Heart right ventricle (tissue), 16 donors: ENCODE measurements at regions of chr11 and their contacts with region 1.

Region 1: DNA sequence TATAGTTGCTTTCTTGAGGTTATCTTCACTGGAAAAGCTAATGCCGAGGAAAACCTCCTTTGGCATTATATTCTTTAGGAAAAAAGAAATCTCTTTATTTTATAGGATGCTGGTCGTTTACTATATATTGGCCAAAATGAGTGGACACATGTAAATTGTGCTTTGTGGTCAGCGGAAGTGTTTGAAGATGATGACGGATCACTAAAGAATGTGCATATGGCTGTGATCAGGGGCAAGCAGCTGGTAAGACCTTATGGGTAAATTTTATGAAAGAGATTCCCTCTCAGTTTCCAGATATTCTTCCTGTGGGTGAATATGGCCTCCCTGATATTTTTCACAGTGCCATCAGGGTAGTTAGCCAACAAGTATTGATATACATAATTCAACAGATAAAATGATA is 29.4 kb upstream of the TTC36 start:
- DNase-seq: no peak
- ATAC-seq: no peak
- H3K4me3 ChIP-seq: no peak overlapping the region
- H3K27ac ChIP-seq: no peak overlapping the region
- H3K4me1 ChIP-seq: peaks cover 0 to 12% (median 0%) of the 10 kb centered on the region in 9 donors
- H3K27me3 ChIP-seq: no peaks in the 10 kb centered on the region
- CTCF ChIP-seq: no peak

Region 2: DNA sequence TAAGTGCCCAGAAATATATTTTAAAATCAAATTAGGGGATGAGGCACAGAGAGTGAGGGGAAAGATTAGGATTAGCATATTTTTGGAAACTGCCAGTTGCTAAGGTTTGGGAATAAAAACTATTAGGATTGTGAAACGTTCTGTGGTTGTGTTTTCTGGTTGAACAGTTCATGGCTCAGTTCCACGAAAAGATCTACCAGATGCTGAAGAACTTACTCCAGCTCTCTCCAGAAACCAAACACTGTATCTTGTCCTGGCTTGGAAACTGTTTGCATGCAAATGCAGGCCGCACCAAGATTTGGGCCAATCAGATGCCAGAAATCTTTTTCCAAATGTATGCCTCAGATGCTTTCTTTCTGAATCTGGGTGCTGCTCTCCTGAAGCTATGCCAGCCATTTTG is 123.1 kb before region 1 on chr11:
- intact Hi-C with region 1: loop called in 1 of 10 experiments (anchors 5 kb)
- DNase-seq: no peak
- ATAC-seq: no peak
- H3K4me3 ChIP-seq: no peak overlapping the region
- H3K27ac ChIP-seq: no peak overlapping the region
- H3K4me1 ChIP-seq: no peaks in the 10 kb centered on the region
- H3K27me3 ChIP-seq: no peaks in the 10 kb centered on the region
- CTCF ChIP-seq: no peak

Region 3: GRCh38 chr11:118380571-118380970 is 117.3 kb before region 1 on chr11:
- intact Hi-C with region 1: loop called in 4 of 10 experiments (anchors 5 kb)
- DNase-seq: no peak
- ATAC-seq: peak in 2 of 8 donors; percentile 68 to 72
- H3K4me3 ChIP-seq: no peak overlapping the region
- H3K27ac ChIP-seq: peak overlapping the region in 2 of 10 donors; percentile 16 to 23
- H3K4me1 ChIP-seq: peaks cover 0 to 5% (median 0%) of the 10 kb centered on the region in 9 donors
- H3K27me3 ChIP-seq: no peaks in the 10 kb centered on the region
- CTCF ChIP-seq: no peak

Region 4: GRCh38 chr11:119011483-119012053 is 513.7 kb after region 1 on chr11:
- intact Hi-C with region 1: no loop called
- DNase-seq: no peak
- ATAC-seq: no peak
- H3K4me3 ChIP-seq: no peak overlapping the region
- H3K27ac ChIP-seq: no peak overlapping the region
- H3K4me1 ChIP-seq: peaks cover 0 to 16% (median 10%) of the 10 kb centered on the region in 9 donors
- H3K27me3 ChIP-seq: no peaks in the 10 kb centered on the region
- CTCF ChIP-seq: no peak